ENCODE measurements at regions of chr7 and their contacts with region 1.

Region 1: GRCh38 chr7:25894902-25895791 is 256.9 kb upstream of the NFE2L3 start:
- DNase-seq: peak; percentile 79
- H3K4me3 ChIP-seq: peak overlapping the region in 3 of 4 donors; percentile 3 to 21 (median 18)
- H3K27ac ChIP-seq: no peak overlapping the region
- H3K4me1 ChIP-seq: peaks cover 0 to 20% (median 9%) of the 10 kb centered on the region in 4 donors
- H3K27me3 ChIP-seq: peaks cover 0 to 28% (median 6%) of the 10 kb centered on the region in 3 donors
- CTCF ChIP-seq: peak in 3 of 4 experiments; percentile 53 to 63 (median 54)
- EP300 ChIP-seq: no peak
- POLR2A ChIP-seq: no peak

Region 2: DNA sequence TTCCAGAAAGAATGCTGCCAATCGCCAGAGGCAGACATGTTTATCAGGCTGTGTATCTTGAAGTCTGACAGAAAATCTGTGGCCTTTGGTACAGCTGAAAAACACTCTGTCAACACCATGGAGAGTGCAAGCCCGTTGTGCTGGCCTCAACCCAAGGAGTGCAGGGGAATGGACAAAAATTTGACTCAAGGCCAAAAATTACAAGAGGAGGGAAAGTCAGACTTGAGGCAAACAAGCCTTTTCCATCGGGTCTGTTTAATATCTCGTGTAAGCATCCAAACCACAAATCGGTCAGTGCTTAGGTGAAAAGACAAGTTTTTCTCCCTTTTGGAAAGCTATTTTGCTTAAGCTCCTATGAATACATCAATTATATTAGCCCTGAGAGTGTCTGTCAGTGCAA is 48.4 kb before region 1 on chr7:
- intact Hi-C with region 1: no loop called
- DNase-seq: peak; percentile 92
- H3K4me3 ChIP-seq: no peak overlapping the region
- H3K27ac ChIP-seq: peak overlapping the region; percentile 79 to 95 (median 83)
- H3K4me1 ChIP-seq: peaks cover 0 to 99% (median 83%) of the 10 kb centered on the region in 4 donors
- H3K27me3 ChIP-seq: no peaks in the 10 kb centered on the region
- CTCF ChIP-seq: no peak
- EP300 ChIP-seq: peak in 2 of 4 donors; percentile 60 to 76
- POLR2A ChIP-seq: no peak

Region 3: GRCh38 chr7:26061688-26062150 is 166.6 kb after region 1 on chr7:
- intact Hi-C with region 1: loop called (anchors 5 kb)
- DNase-seq: no peak
- H3K4me3 ChIP-seq: no peak overlapping the region
- H3K27ac ChIP-seq: no peak overlapping the region
- H3K4me1 ChIP-seq: peaks cover 0 to 14% (median 10%) of the 10 kb centered on the region in 4 donors
- H3K27me3 ChIP-seq: peaks cover 0 to 37% (median 0%) of the 10 kb centered on the region in 3 donors
- CTCF ChIP-seq: peak in 3 of 4 experiments; percentile 54 to 70 (median 61)
- EP300 ChIP-seq: no peak
- POLR2A ChIP-seq: no peak

Region 4: GRCh38 chr7:26667500-26668133 is 772.5 kb after region 1 on chr7:
- intact Hi-C with region 1: loop called (anchors 5 kb)
- DNase-seq: peak; percentile 69
- H3K4me3 ChIP-seq: no peak overlapping the region
- H3K27ac ChIP-seq: no peak overlapping the region
- H3K4me1 ChIP-seq: peaks cover 0 to 5% (median 0%) of the 10 kb centered on the region in 4 donors
- H3K27me3 ChIP-seq: no peaks in the 10 kb centered on the region
- CTCF ChIP-seq: peak; percentile 42 to 71 (median 66)
- EP300 ChIP-seq: no peak
- POLR2A ChIP-seq: no peak

Measured in sigmoid colon (tissue), 7 donors.